Left ventricle myocardium superior (tissue), 1 donor: ENCODE measurements at regions of chr1 and their contacts with region 1.

Region 1: GRCh38 chr1:61436016-61436415 is 288.9 kb downstream of the TM2D1 start:
- DNase-seq: peak; percentile 31
- ATAC-seq: no peak

Region 2: GRCh38 chr1:61388566-61388965 is 47.5 kb before region 1 on chr1:
- intact Hi-C with region 1: loop called (anchors 10 kb)
- DNase-seq: no peak
- ATAC-seq: no peak

Region 3: DNA sequence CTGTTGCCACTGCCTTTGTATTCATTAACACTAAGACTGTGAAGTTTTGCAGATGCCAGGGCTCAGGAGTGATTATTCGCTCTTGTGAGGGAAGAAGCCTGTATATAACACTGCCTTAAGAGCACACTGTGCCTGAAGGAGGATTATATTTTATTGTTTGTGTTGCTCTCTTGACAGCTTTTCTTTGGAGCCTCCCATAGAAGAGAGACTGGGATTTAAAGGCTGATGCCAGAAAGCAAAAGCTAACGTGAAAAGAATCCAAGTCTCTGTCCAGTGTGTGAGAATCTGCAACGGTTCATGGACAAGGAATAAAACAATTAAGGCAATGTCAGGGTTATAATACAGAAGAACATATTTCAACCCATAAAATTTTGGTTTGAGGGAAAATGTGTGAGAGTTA is 36.8 kb before region 1 on chr1:
- intact Hi-C with region 1: no loop called
- DNase-seq: no peak
- ATAC-seq: peak; percentile 54

Region 4: DNA sequence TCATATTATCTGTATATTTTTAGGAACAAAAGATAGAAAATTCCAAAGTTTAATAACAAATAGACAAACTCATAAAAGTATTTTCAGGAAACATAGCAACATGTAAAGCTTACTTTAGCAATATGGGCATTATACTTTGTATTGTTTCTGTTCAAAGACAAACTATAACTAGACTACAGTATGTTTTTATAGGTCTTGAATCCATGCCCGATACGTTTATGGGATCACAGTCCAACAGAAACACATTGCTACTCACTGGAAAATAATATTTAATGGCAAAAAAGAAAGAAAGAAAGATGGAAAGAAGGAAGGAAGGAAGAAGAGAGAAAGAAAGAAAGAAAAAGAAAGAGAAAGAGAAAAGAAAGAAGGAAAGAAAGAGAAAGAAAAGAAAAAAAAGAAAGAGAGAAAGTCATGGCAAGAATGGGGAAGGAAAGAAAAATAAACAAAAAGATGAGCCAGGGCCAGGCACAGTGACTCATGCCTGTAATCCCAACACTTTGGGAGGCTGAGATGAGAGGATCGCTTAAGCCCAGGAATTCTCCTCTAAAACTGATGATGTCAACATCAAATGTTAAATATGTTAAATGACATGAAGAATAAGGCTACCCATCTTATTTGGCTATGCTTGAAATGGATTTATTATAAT is 256.3 kb after region 1 on chr1:
- intact Hi-C with region 1: no loop called
- DNase-seq: no peak
- ATAC-seq: no peak